PC-3 (cell line): ENCODE measurements at regions of chr6 and their contacts with region 1.

Region 1: DNA sequence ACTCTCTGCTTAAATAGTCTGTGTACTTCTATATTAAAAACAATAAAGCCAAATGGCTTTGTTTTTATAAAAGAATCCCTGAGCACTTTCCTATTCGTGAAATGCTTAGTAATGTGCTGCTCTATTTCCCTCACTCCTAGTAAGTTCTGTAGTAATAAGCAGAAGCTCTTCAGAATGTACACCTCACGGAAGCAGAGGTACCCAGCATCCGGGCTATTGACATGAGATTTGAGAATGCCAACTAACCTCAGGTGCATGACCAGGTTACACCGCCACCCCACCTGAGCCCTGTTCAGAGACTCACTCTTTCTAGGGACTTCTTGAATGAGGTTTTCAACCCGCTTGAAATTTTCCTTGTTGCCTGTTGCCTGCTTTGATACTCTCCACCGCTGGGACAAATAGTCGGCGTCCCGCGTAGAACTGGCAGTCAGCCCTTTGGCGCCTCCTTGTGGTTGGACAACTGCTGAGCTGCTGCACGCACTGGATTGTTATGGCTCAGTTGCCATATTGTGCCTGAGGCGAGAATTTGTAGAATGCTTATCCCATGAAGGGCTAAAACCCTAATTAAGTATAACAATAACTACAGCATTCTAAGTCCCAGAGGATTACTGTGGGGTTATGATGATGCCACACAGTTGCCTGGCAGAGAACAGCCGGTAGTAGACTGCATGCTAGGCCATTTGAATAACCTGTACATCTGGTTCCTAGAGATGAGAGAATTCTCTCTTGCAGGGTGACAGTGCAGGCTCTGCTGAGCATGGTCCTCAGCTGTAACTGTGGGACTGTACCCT is 95.4 kb downstream of the KHDC1L start:
- DNase-seq: peak; percentile 87
- ATAC-seq: peak; percentile 93
- H3K4me3 ChIP-seq: 0 out of 2 replicates have a peak overlapping the region, but pooled peaks have one; percentile 5
- H3K27ac ChIP-seq: no peak overlapping the region
- H3K4me1 ChIP-seq: peaks cover 9% of the 10 kb centered on the region; the same call in 1 of the 2 replicates
- H3K27me3 ChIP-seq: no peaks in the 10 kb centered on the region
- CTCF ChIP-seq: peak; percentile 95

Region 2: DNA sequence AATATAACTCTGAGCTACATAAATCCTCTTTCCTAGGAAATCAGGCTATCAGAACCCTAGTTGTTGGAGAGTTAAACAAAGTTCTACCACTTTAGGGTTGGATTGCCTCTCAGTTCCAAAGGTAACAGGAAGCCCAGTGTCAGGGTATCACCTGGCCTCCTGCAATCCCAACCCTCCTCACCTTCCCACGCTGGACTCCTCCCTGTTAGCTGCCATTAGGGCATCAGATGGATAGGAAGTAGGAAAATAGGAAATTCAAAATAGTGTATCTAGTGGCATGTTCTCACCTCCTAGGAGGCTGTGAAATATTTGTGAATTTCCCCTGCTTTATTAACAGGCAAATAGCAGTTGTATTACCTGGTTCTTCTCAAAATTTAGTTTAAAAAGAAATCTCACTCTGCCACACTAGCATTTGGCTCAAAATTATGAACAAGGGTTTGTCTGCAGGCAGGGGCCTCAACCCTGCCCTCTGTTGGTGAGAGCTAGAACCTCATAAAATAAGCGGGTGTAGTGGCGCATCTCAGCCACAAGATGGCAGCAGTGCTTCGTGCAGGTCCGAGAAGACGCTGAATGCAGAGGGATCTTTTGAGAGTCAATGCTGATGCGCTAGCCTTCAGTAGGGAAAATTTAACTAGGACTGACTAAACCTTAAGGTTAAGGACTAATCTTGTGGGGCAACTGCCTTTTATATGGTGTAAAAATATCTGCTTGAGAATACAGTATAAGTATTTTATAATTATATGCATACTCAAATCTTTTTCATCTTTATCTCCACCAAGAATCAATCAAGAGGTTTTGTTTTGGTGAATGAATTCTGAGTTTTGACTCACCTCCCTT is 717.8 kb before region 1 on chr6:
- CTCF ChIA-PET with region 1: no interaction called
- POLR2A ChIA-PET with region 1: no interaction called
- intact Hi-C with region 1: loop called (anchors 5 kb)
- DNase-seq: peak; percentile 80
- ATAC-seq: peak; percentile 85
- H3K4me3 ChIP-seq: no peak overlapping the region
- H3K27ac ChIP-seq: no peak overlapping the region
- H3K4me1 ChIP-seq: peaks cover 7% of the 10 kb centered on the region
- H3K27me3 ChIP-seq: no peaks in the 10 kb centered on the region
- CTCF ChIP-seq: peak; percentile 99

Region 3: DNA sequence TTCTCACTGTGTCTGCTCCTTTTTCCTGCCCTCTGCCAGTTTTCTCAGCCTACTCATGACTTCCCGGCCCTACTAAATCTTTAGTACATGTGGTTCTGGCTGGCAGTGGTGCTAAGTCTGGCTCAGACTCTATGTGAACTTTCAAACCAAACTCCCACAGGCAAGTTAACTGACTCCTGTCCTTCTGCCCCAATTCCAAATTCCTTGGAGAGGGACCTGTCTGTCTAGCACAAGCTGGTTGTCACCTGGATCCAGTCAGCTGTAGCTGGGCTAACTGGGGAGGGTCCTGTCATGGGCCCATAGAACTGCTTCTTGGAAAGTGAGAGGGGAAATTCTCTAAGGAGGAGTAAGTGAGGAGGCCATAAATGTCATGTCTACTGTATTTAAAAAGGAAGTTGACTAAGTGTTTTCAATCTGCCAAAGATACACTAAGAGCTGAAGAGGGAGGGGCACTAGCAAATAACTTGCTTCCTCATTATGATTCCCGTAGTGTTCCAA is 267.9 kb before region 1 on chr6:
- CTCF ChIA-PET with region 1: no interaction called
- POLR2A ChIA-PET with region 1: no interaction called
- intact Hi-C with region 1: loop called (anchors 5 kb)
- DNase-seq: peak; percentile 67
- ATAC-seq: peak; percentile 94
- H3K4me3 ChIP-seq: no peak overlapping the region
- H3K27ac ChIP-seq: peak overlapping the region; percentile 78
- H3K4me1 ChIP-seq: peaks cover 18% of the 10 kb centered on the region
- H3K27me3 ChIP-seq: no peaks in the 10 kb centered on the region
- CTCF ChIP-seq: no peak

Region 4: DNA sequence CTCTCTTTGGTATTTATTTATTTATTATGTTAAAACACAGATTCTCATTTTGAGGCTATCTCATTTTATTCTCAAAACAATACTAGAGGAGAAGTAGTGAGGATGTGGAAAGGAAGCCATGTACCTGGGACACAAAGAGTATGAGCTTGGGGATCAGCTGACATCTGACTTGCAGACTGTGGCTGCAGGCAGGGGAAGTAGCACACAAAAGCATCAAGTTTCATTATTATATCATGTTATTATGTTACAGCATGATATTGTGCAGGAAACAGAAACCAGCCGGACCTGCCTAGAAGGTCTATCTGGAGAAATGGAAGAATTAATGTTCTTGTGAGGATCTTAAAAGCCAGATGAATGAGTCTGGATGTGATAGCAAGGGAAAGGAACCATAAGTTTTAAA is 152.7 kb before region 1 on chr6:
- CTCF ChIA-PET with region 1: no interaction called
- POLR2A ChIA-PET with region 1: no interaction called
- intact Hi-C with region 1: loop called (anchors 5 kb)
- DNase-seq: peak; percentile 55
- ATAC-seq: peak; percentile 78
- H3K4me3 ChIP-seq: no peak overlapping the region
- H3K27ac ChIP-seq: no peak overlapping the region
- H3K4me1 ChIP-seq: peaks cover 32% of the 10 kb centered on the region
- H3K27me3 ChIP-seq: no peaks in the 10 kb centered on the region
- CTCF ChIP-seq: no peak

Region 5: DNA sequence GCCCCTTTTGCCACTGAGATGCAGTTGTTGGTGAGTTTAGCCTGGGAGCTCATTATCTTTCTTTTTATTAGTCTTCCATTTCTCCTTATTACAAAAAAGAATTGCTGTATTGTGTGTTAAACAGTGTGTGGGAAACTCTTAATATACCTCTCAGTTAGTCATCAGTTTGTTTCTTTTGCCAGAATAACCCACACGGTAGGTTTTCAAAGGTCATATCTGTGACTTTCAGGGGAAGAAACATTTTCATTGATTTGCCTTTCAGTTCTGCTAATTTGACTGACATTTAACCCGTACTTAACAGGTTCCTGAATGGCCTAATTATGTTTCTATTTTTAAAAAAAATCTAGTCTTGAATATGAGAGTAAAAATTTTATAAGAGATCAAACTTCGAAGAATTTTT is 49.9 kb before region 1 on chr6:
- CTCF ChIA-PET with region 1: no interaction called
- POLR2A ChIA-PET with region 1: no interaction called
- intact Hi-C with region 1: loop called (anchors 2 kb)
- DNase-seq: peak; percentile 66
- ATAC-seq: peak; percentile 59
- H3K4me3 ChIP-seq: peak overlapping the region; percentile 45; the same call in 1 of the 2 replicates
- H3K27ac ChIP-seq: peak overlapping the region; percentile 100
- H3K4me1 ChIP-seq: peaks cover 54% of the 10 kb centered on the region
- H3K27me3 ChIP-seq: no peaks in the 10 kb centered on the region
- CTCF ChIP-seq: no peak

Region 6: DNA sequence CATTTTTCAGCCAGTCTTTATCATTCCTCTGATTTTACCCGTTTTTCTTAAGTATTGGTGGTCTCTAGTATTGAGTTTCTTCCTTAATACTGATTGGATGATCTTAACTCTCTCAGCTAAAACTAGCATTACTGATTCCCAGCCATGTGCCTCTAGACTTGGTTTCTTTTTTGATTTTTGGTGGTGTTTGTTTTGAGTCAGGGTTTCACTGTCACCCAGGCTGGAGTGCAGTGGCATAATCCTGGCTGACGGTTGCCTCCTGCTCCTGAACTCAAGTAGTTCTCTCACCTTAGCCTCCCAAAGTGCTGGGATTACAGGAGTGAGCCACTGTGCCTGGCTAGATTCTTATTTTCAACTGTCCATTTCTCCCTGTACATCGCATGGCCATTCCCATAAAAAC is 199.4 kb after region 1 on chr6:
- CTCF ChIA-PET with region 1: no interaction called
- POLR2A ChIA-PET with region 1: no interaction called
- intact Hi-C with region 1: loop called (anchors 5 kb)
- DNase-seq: no peak
- ATAC-seq: no peak
- H3K4me3 ChIP-seq: no peak overlapping the region
- H3K27ac ChIP-seq: no peak overlapping the region
- H3K4me1 ChIP-seq: peaks cover 3% of the 10 kb centered on the region; the same call in 1 of the 2 replicates
- H3K27me3 ChIP-seq: no peaks in the 10 kb centered on the region
- CTCF ChIP-seq: no peak